ENCODE measurements at regions of chr11 and their contacts with region 1.

Region 1: DNA sequence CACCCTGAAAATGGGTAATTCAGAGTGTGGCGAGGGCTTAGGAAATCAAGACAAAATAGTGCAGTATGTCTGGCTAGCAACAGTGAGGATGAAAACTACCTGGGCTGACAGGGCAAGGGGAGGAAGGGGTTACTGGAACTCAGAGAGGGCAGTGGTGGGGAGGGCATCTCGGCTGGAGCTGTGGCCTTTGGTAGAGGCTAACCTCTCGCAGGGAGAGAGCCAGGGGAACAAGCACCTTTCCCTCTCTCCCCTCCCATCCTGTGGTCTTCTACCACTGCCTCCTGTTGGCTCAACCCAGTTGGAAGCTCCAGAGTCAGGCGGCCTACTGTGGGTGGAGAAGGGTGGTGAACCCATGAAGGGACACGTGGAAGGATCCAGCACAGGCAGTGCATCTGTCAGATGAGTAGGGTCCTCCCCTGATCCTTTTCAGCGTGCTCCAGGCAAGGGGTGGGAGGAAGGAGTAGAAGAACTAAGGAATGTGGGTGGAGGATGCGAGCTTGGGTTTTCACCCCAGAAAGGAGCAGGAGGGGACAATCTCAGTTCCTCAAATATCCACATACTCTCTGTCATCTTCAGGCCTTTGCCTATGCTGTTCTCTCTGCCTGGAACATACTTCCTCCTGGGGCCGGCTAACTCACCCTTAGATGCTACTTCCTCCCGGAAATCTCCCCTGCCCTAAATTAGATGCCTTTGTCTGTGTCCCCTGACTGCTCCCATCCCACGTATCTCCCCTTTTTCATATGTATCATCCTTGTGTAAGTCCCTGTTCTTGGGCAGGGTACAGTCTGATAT is 6.2 kb upstream of the KCNE3 start:
- DNase-seq: no peak
- H3K4me3 ChIP-seq: no peak overlapping the region
- CTCF ChIP-seq: no peak

Region 2: DNA sequence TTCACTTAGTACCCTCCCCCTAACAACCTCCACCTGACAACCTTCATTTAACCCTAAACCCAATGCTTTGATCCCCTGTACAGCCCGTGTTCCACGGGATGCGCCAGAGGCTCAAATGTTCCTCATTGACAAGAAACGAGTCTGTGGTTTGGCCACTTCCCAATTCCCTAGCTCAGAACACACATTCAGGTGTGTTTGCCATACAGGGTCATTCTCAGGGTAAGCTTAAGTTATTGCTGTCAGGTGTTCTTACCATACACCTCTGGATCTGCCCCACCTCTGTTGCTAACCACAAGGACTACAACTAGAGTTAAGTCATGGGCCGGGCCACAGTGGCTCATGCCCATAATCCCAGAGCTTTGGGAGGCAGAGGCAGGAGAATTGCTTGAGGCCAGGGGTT is 73.1 kb after region 1 on chr11:
- in situ Hi-C with region 1: loop called (anchors 5 kb)
- DNase-seq: no peak
- H3K4me3 ChIP-seq: no peak overlapping the region
- CTCF ChIP-seq: no peak

Region 3: GRCh38 chr11:74570266-74571061 is 96.9 kb after region 1 on chr11:
- in situ Hi-C with region 1: loop called (anchors 10 kb)
- DNase-seq: peak; percentile 29
- H3K4me3 ChIP-seq: no peak overlapping the region
- CTCF ChIP-seq: peak; percentile 71

Measured in astrocyte of the cerebellum (primary cell).